ENCODE measurements at regions of chr2 and their contacts with region 1.

Region 1: GRCh38 chr2:235493775-235494715 is at the start of gene AGAP1:
- DNase-seq: peak; percentile 82 to 99 (median 90)

Region 2: GRCh38 chr2:235142601-235143000 is 351.4 kb before region 1 on chr2:
- intact Hi-C with region 1: loop called (anchors 5 kb)
- DNase-seq: no peak

Region 3: GRCh38 chr2:235384624-235385023 is 109.4 kb before region 1 on chr2:
- intact Hi-C with region 1: loop called (anchors 2 kb)
- DNase-seq: peak; percentile 70 to 97 (median 85)

Region 4: GRCh38 chr2:235433860-235434259 is 60.2 kb before region 1 on chr2:
- intact Hi-C with region 1: loop called (anchors 5 kb)
- DNase-seq: peak in 5 of 10 donors; percentile 36 to 86 (median 58)

Region 5: GRCh38 chr2:235669983-235670962 is 176.2 kb after region 1 on chr2:
- intact Hi-C with region 1: loop called (anchors 5 kb)
- DNase-seq: peak; percentile 49 to 96 (median 70)

Measured in posterior cingulate gyrus (tissue), 11 donors.